BJ (cell line): ENCODE measurements at regions of chr15 and their contacts with region 1.

Region 1: GRCh38 chr15:77543159-77543882 is 89.4 kb downstream of the LINGO1 start:
- DNase-seq: no peak
- H3K4me3 ChIP-seq: peak overlapping the region; percentile 27
- H3K27me3 ChIP-seq: no peaks in the 10 kb centered on the region
- CTCF ChIP-seq: peak; percentile 98

Region 2: DNA sequence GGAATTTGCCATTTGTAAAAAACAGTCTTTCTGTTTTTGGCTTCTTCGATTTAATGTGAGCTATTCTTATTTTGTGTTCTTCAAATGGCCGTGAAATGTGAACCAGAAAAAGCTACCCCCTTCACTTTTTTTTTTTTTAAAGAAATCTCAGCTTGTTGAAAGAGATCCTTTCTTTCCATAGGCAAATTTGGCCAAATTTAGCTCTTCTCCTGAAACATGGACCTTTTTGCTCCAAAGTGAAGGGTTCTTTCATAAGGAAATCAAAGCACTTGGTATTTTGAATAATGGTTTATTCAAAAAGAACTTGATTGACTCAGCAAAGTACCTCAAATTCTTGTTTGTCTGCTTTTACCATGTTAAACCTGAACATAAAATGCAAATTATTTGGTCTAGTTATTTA is 601.7 kb before region 1 on chr15:
- CTCF ChIA-PET with region 1: interaction called, 21 read pairs
- POLR2A ChIA-PET with region 1: no interaction called
- DNase-seq: no peak
- H3K4me3 ChIP-seq: no peak overlapping the region
- H3K27me3 ChIP-seq: no peaks in the 10 kb centered on the region
- CTCF ChIP-seq: no peak

Region 3: GRCh38 chr15:77034695-77035489 is 508.4 kb before region 1 on chr15:
- CTCF ChIA-PET with region 1: interaction called, 25 read pairs
- POLR2A ChIA-PET with region 1: no interaction called
- DNase-seq: no peak
- H3K4me3 ChIP-seq: no peak overlapping the region
- H3K27me3 ChIP-seq: no peaks in the 10 kb centered on the region
- CTCF ChIP-seq: peak; percentile 72

Region 4: GRCh38 chr15:77118882-77119321 is 424.4 kb before region 1 on chr15:
- CTCF ChIA-PET with region 1: interaction called, 98 read pairs
- POLR2A ChIA-PET with region 1: no interaction called
- DNase-seq: peak; percentile 28
- H3K4me3 ChIP-seq: no peak overlapping the region
- H3K27me3 ChIP-seq: no peaks in the 10 kb centered on the region
- CTCF ChIP-seq: peak; percentile 81

Region 5: GRCh38 chr15:77179541-77179998 is 363.8 kb before region 1 on chr15:
- CTCF ChIA-PET with region 1: interaction called, 10 read pairs
- POLR2A ChIA-PET with region 1: no interaction called
- DNase-seq: no peak
- H3K4me3 ChIP-seq: no peak overlapping the region
- H3K27me3 ChIP-seq: no peaks in the 10 kb centered on the region
- CTCF ChIP-seq: no peak

Region 6: GRCh38 chr15:77282333-77282732 is 261.0 kb before region 1 on chr15:
- CTCF ChIA-PET with region 1: interaction called, 17 read pairs
- POLR2A ChIA-PET with region 1: no interaction called
- DNase-seq: peak; percentile 91
- H3K4me3 ChIP-seq: no peak overlapping the region
- H3K27me3 ChIP-seq: no peaks in the 10 kb centered on the region
- CTCF ChIP-seq: no peak

Region 7: DNA sequence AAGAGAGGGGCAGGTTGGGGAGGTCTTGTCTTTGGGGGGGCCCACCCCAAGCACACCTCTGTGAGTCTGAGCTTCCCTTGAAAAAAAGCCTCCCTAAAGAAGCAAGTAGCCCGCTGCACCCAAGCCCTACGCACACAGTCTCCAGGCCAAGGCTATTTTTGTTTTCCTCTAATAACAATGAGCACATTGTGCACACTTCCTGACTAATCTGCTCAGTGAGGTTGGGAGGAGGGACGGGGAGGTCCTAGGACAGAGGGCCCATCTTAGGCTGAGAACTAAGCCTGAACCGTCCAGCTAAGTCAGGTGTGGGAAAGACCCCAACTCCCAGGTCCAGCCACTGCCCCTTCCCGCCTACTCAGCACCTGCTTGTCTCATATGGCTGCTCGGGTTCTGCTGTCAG is 35.4 kb before region 1 on chr15:
- CTCF ChIA-PET with region 1: interaction called, 15 read pairs
- POLR2A ChIA-PET with region 1: no interaction called
- DNase-seq: no peak
- H3K4me3 ChIP-seq: no peak overlapping the region
- H3K27me3 ChIP-seq: no peaks in the 10 kb centered on the region
- CTCF ChIP-seq: no peak